PC-3 (cell line): ENCODE measurements at regions of chr5 and their contacts with region 1.

Region 1: GRCh38 chr5:52948418-52949076 is 40.6 kb upstream of the ITGA2 start:
- DNase-seq: peak; percentile 89
- ATAC-seq: peak; percentile 86
- H3K4me3 ChIP-seq: no peak overlapping the region
- H3K27ac ChIP-seq: no peak overlapping the region
- H3K4me1 ChIP-seq: peaks cover 29% of the 10 kb centered on the region
- H3K27me3 ChIP-seq: no peaks in the 10 kb centered on the region
- CTCF ChIP-seq: peak; percentile 91

Region 2: DNA sequence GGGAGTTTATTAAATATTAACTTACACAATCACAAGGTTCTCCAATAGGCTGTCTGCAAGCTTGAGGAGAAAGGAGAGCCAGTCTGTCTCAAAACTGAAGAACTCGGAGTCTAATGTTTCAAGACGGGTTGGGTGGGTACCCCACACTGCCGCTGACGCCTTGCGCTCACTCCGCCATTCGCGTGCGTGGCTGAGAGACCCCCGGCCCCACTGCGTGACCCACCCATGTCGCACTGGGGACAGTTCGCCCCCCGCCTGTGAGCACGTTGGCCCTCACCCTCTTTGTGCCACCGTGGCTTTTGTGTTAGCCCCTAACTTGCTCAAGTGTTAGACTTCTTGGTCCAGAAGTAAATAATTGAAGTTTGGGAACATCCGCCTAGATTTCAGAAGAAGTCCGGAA is 430.9 kb before region 1 on chr5:
- CTCF ChIA-PET with region 1: no interaction called
- POLR2A ChIA-PET with region 1: no interaction called
- intact Hi-C with region 1: no loop called
- DNase-seq: no peak
- ATAC-seq: no peak
- H3K4me3 ChIP-seq: no peak overlapping the region
- H3K27ac ChIP-seq: no peak overlapping the region
- H3K4me1 ChIP-seq: no peaks in the 10 kb centered on the region
- H3K27me3 ChIP-seq: peaks cover 5% of the 10 kb centered on the region; the same call in 1 of the 2 replicates
- CTCF ChIP-seq: no peak

Region 3: DNA sequence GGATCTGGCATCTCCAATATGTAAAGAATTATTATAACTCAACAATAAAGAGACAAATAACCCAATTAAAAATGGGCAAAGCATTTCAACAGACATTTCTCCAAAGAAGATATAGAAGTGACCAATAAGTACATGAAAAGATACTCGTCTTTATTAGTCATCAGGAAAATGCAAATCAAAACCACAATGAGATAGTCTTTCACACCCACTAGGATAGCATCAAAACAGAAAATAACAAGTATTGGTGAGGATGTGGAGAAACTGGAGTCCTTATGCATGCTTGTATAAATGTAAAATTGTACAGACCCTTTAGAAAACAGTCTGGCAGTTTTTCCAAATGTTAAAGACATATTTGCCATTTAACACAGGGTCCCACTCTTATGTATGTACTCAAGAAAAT is 200.0 kb before region 1 on chr5:
- CTCF ChIA-PET with region 1: no interaction called
- POLR2A ChIA-PET with region 1: no interaction called
- intact Hi-C with region 1: no loop called
- DNase-seq: no peak
- ATAC-seq: no peak
- H3K4me3 ChIP-seq: no peak overlapping the region
- H3K27ac ChIP-seq: no peak overlapping the region
- H3K4me1 ChIP-seq: peaks cover 13% of the 10 kb centered on the region
- H3K27me3 ChIP-seq: no peaks in the 10 kb centered on the region
- CTCF ChIP-seq: no peak

Region 4: DNA sequence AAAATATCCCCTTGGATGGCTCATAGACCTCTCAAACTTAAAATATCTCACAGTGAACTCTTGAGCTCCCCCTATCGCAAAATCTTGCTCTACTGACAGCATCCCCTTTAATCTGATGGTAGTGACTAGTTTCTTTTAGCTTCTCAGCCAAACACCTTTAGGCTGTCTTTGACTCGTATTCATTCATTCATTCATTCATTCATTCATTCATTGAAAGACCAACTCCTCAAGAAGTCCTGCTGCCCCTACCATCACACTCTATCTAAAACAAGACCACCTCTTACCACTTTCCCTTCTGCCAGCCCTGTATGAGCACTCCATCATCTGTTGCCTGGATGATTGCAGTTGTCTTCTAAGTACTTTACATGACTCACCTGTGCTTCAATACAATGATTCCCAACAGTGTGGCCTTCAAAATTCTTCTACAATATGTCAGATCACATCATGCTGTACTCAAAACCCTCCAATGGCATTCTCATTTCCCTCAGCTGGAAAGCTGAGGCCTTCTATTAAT is 87.4 kb after region 1 on chr5:
- CTCF ChIA-PET with region 1: interaction called, 7 read pairs
- POLR2A ChIA-PET with region 1: interaction called, 5 read pairs
- intact Hi-C with region 1: loop called (anchors 5 kb)
- DNase-seq: peak; percentile 52
- ATAC-seq: no peak
- H3K4me3 ChIP-seq: no peak overlapping the region
- H3K27ac ChIP-seq: peak overlapping the region; percentile 97
- H3K4me1 ChIP-seq: peaks cover 67% of the 10 kb centered on the region
- H3K27me3 ChIP-seq: no peaks in the 10 kb centered on the region
- CTCF ChIP-seq: peak; percentile 54

Region 5: DNA sequence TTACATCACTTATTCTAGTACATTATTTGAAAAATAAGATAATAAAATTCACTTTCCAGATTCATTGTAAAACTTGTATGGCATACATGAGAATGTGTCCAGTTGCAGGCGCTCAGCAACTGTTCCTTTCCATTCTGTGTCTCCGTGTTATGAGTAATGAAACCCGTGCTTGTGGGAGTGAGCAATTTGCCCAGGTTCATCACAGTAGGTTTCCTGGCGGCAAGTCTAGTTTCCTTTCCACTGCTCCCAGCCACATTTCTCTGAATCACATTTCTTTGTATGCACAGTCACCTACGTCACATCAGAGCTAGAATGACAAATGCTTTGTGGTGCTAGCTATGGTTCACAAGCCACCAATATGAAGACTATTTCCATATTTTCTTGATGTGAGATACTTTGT is 121.1 kb after region 1 on chr5:
- CTCF ChIA-PET with region 1: no interaction called
- POLR2A ChIA-PET with region 1: no interaction called
- intact Hi-C with region 1: loop called (anchors 10 kb)
- DNase-seq: peak; percentile 88
- ATAC-seq: peak; percentile 96
- H3K4me3 ChIP-seq: no peak overlapping the region
- H3K27ac ChIP-seq: peak overlapping the region; percentile 77
- H3K4me1 ChIP-seq: peaks cover 18% of the 10 kb centered on the region
- H3K27me3 ChIP-seq: no peaks in the 10 kb centered on the region
- CTCF ChIP-seq: no peak

Region 6: DNA sequence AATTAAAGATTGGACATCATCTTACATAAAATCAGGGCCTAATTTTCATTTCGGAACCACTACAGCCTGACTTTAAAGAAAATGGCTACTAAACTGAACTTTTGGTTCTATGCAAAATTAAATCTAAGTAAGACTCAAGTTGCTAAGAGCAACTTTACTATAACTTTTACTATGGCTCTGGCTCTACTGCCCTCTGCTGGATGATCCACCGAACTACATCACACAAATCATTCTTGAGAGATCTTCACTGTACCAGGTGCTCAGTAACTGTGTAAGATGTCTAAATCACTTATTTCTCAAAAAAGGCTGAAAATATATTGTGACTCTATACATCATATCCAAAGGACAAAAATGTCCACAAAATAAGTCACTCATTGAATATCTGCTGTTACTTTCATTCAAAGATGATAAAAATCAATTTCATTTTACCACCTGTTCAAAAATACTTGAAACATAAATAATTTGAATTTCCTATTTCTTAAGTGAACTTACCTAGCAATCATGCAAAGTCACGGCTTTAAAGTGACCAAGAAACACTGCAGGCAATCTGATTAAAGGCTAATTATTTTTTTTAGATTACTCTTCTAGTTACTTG is 147.5 kb after region 1 on chr5:
- CTCF ChIA-PET with region 1: interaction called, 3 read pairs
- POLR2A ChIA-PET with region 1: no interaction called
- intact Hi-C with region 1: loop called (anchors 1 kb)
- DNase-seq: peak; percentile 80
- ATAC-seq: peak; percentile 41
- H3K4me3 ChIP-seq: no peak overlapping the region
- H3K27ac ChIP-seq: no peak overlapping the region
- H3K4me1 ChIP-seq: peaks cover 8% of the 10 kb centered on the region; the same call in 1 of the 2 replicates
- H3K27me3 ChIP-seq: no peaks in the 10 kb centered on the region
- CTCF ChIP-seq: peak; percentile 87